WTC11 (cell line): ENCODE measurements at regions of chr1 and their contacts with region 1.

Region 1: DNA sequence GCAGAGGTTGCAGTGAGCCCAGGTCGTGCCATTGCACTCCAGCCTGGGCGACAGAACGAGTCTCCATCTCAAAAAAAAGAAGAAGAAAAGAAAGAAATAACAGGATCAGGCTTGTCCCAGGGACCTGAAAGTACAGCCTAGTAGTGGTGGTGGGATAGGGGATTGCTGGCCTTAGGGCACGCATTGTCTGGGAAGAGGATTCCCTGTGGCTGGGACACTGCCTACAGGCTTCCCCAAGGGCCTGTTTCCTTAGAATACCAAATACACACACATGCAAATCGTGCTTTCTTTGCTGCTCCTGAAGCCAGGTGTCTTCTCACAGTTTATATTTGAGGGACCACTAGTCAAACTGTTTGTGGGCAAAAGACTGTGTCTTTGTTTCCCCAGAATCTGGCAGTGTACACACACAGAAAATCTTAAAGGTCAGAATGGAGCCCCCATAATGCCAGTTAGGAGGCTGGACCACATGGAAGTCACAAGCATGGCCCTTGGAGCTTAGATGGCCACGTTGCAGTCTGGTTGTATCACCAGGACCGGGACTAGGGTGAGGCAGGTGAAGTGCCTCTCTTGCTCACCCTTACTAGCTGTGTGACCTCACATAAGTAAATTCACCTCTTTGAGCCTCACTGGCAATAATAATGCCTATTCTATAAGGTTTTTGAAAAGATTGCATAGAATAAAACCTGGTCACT is 12.7 kb upstream of the ASAP3 start:
- DNase-seq: no peak
- ATAC-seq: peak; percentile 51
- H3K4me3 Mint-ChIP-seq: no peak overlapping the region
- H3K27ac Mint-ChIP-seq: no peak overlapping the region
- H3K4me1 Mint-ChIP-seq: peaks cover 12% of the 10 kb centered on the region
- H3K27me3 Mint-ChIP-seq: peaks cover 4% of the 10 kb centered on the region
- CTCF ChIP-seq: no peak

Region 2: DNA sequence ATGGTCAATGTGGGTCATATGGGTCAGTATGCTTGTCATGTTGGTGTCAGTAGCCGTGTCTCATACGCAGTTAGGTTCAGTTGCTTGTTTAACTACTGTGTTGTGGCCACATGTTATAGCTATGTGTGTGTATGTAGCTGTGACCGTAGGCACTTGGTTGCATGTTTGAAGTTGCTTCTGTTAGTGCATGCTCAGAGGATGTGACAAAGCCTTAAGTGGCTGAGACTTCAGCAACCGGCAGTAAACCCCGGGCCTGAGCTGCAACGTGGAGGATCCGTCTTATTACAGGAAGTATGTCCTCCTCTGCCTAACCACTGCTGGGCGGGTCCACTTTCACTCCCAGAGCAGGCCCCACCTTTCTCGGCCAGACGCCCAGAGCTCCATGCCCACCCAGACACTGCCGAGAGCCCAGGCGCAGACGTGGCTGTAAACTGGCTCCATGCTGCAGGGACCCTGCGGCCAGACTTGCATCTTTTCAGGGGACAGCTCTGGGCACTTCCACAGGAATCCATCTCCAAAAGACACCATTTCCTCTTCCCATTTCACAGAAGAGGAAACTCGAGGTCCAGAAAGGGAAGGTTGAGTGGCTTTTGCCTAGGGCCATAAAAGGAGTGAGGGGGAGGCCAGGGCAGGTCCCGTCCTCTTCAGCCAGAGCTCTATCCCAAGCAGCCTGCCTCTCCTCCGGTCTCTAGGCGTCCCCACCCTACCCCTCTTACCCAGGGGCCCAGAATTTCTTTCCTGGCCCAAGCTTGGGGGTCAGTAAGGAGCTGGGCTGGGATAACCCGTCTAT is 74.2 kb before region 1 on chr1:
- CTCF ChIA-PET with region 1: interaction called, 22 read pairs
- POLR2A ChIA-PET with region 1: interaction called, 3 read pairs
- DNase-seq: no peak
- ATAC-seq: no peak
- H3K4me3 Mint-ChIP-seq: no peak overlapping the region
- H3K27ac Mint-ChIP-seq: no peak overlapping the region
- H3K4me1 Mint-ChIP-seq: peaks cover 11% of the 10 kb centered on the region
- H3K27me3 Mint-ChIP-seq: peaks cover 100% of the 10 kb centered on the region
- CTCF ChIP-seq: no peak

Region 3: GRCh38 chr1:23507507-23507906 is 10.9 kb after region 1 on chr1:
- CTCF ChIA-PET with region 1: interaction called, 58 read pairs
- POLR2A ChIA-PET with region 1: interaction called, 5 read pairs
- DNase-seq: no peak
- ATAC-seq: no peak
- H3K4me3 Mint-ChIP-seq: no peak overlapping the region
- H3K27ac Mint-ChIP-seq: no peak overlapping the region
- H3K4me1 Mint-ChIP-seq: 0 out of 2 replicates have a peak, but pooled peaks cover 7% of the 10 kb centered on the region
- H3K27me3 Mint-ChIP-seq: no peaks in the 10 kb centered on the region; the same call in 1 of the 2 replicates
- CTCF ChIP-seq: no peak

Region 4: DNA sequence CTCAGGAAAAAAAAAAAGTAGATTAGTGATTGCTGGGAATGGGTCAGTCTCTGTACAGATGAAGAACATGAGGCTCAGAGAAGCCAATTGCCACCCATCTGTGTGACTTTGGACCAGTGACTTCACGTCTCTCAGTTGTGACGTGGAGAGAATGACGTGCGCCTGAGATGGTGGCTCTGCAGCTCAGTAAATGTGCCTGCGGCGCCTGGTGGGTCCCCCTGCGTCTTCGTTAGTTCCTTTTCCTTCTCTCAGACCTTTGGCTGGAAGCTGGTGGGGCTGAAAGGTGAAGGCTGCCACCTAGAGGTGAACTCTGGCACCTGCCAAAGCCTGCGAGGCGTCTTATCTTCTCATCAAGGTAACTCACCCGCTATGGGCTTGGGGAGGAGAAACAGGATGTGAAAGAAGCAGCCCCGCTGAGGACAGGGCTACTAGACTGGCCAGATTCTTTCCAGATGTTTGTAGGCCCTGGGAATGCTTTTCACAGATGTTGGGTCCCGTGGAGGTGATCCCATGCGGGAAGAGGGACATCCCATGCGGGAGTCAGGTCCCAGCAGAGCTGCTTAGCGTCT is 43.1 kb after region 1 on chr1:
- CTCF ChIA-PET with region 1: interaction called, 220 read pairs
- POLR2A ChIA-PET with region 1: interaction called, 5 read pairs
- DNase-seq: peak; percentile 97
- ATAC-seq: peak; percentile 95
- H3K4me3 Mint-ChIP-seq: no peak overlapping the region
- H3K27ac Mint-ChIP-seq: peak overlapping the region; percentile 64; the same call in 1 of the 2 replicates
- H3K4me1 Mint-ChIP-seq: peaks cover 10% of the 10 kb centered on the region
- H3K27me3 Mint-ChIP-seq: no peaks in the 10 kb centered on the region; the same call in 1 of the 2 replicates
- CTCF ChIP-seq: peak; percentile 76

Region 5: GRCh38 chr1:23664837-23665795 is 168.5 kb after region 1 on chr1:
- CTCF ChIA-PET with region 1: interaction called, 15 read pairs
- POLR2A ChIA-PET with region 1: no interaction called
- DNase-seq: peak; percentile 16
- ATAC-seq: peak; percentile 56
- H3K4me3 Mint-ChIP-seq: no peak overlapping the region
- H3K27ac Mint-ChIP-seq: no peak overlapping the region
- H3K4me1 Mint-ChIP-seq: peaks cover 3% of the 10 kb centered on the region; the same call in 1 of the 2 replicates
- H3K27me3 Mint-ChIP-seq: no peaks in the 10 kb centered on the region
- CTCF ChIP-seq: peak; percentile 62

Region 6: GRCh38 chr1:23916209-23917131 is 419.8 kb after region 1 on chr1:
- CTCF ChIA-PET with region 1: no interaction called
- POLR2A ChIA-PET with region 1: no interaction called
- DNase-seq: peak; percentile 80
- ATAC-seq: peak; percentile 97
- H3K4me3 Mint-ChIP-seq: no peak overlapping the region
- H3K27ac Mint-ChIP-seq: no peak overlapping the region
- H3K4me1 Mint-ChIP-seq: peaks cover 6% of the 10 kb centered on the region
- H3K27me3 Mint-ChIP-seq: peaks cover 6% of the 10 kb centered on the region; the same call in 1 of the 2 replicates
- CTCF ChIP-seq: no peak